H1 (cell line): ENCODE measurements at regions of chr3 and their contacts with region 1.

Region 1: DNA sequence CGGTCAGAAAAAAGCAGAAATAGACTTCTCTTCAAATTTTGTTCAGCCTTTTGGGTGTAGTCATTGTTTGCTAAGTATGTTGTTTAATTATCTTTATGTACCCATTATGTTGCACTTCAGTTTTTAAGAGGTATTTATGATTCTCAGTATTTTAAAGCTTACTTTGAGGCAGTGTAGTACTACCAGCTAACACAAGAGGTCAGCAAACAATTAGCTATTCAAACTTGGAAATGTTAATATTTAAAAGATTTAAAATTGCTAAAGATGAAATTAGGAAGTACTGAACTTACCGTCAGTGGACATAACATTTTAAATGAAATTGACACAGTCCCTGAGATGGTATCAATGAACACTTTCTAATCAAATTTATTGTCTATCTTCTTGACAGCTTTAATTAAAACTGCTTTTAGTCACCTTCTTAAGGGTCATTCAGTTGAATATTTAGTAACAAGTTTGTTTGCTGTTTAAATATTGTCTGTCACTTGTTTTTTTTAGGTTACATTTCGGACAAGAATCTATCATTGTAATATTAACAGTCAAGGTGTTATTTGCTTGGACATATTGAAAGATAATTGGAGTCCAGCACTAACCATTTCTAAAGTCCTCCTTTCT is 28.1 kb downstream of the NKIRAS1 start:
- DNase-seq: no peak
- H3K4me3 ChIP-seq: no peak overlapping the region
- H3K27ac ChIP-seq: no peak overlapping the region
- H3K4me1 ChIP-seq: peaks cover 0 to 7% (median 1%) of the 10 kb centered on the region in 4 experiments; a peak in 3 of 7 replicates
- H3K27me3 ChIP-seq: no peaks in the 10 kb centered on the region
- CTCF ChIP-seq: peak in 2 of 3 experiments; percentile 5 to 53; a peak in 2 of 4 replicates
- EP300 ChIP-seq: no peak
- POLR2A ChIP-seq: no peak
- RAD21 ChIP-seq: peak in 1 of 2 experiments; percentile 64

Region 2: GRCh38 chr3:23819599-23820360 is 68.9 kb before region 1 on chr3:
- CTCF ChIA-PET with region 1: no interaction called
- POLR2A ChIA-PET with region 1: no interaction called
- DNase-seq: no peak
- H3K4me3 ChIP-seq: no peak overlapping the region
- H3K27ac ChIP-seq: no peak overlapping the region
- H3K4me1 ChIP-seq: peaks cover 0 to 17% (median 5%) of the 10 kb centered on the region in 4 experiments; a peak in 4 of 7 replicates
- H3K27me3 ChIP-seq: no peaks in the 10 kb centered on the region
- CTCF ChIP-seq: no peak
- EP300 ChIP-seq: no peak
- POLR2A ChIP-seq: 0 out of 3 replicates have a peak, but pooled peaks of 1 of the 2 experiments have one; percentile 27
- RAD21 ChIP-seq: no peak

Region 3: DNA sequence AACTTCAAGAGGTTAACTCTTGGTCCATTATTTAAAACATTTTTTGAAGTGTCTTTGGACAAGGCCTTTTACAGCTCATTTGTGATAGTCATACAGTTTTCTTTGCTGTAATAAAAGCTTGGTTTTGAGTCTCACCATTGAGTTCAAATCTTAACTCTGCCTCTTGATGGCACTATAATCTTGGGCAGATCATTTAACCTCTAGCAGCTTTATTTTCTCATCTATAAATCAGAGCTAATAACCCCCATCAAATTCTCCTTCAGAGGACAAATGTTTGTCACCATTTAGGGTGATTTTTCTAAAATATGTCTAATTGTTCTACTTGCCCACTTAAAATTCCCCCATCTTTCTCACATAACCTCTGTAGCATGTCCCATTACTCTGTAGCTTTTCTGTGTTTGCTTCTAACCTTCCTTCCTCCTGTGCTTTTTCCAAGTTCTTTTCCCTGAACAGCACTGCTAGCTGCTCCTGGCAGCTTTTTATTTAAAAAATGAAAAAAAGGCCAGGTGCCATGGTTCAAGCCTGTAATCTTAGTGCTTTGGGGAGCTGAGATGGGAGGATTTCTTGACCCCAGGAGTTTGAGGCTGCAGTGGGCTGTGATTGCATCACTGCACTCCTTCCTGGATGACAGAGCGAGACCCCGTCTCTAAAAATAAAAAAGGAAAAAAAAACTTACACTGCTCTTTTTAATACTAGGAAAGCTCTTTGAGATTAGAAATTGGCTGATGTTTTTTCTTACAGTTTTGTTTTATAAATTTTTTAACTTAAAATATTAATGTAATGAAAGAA is 54.4 kb before region 1 on chr3:
- CTCF ChIA-PET with region 1: interaction called, 15 read pairs
- POLR2A ChIA-PET with region 1: no interaction called
- DNase-seq: no peak
- H3K4me3 ChIP-seq: no peak overlapping the region
- H3K27ac ChIP-seq: no peak overlapping the region
- H3K4me1 ChIP-seq: no peaks in the 10 kb centered on the region; a peak in 2 of 7 replicates
- H3K27me3 ChIP-seq: no peaks in the 10 kb centered on the region
- CTCF ChIP-seq: no peak
- EP300 ChIP-seq: no peak
- POLR2A ChIP-seq: no peak
- RAD21 ChIP-seq: peak; percentile 41 to 44

Region 4: DNA sequence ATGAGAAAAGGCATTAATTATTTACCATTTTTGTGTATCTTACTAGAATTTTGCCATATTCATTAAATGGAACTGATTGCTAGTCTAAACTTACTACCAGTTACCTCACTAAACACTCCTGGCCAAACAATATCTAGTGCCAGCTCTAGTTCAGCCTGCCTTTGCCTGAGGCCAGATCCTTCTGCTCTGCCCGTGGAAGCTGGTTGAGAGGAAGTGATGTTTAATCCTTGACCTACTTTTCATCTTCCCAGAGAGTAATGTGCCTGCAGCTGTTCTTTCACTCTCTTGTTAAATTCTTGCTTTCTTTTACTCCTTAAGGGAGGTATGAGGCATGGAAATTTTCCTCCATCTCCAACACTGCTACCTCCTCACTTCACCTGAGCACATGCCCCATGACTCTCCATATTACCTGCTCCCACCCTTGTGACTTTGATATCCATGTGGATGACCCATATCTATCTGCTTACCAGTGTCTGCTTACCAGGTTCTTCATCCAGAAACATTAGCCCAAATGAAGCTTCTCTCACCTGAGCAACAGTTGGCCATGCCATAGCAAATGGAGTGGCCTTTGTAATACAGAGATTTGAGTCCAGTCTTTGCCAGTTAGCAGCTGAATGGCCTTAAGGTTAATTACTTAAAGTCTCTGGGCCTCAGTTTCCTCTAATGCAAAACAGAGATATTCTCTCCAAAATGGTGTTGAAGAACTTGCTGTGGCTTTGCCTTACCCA is 29.5 kb before region 1 on chr3:
- CTCF ChIA-PET with region 1: interaction called, 13 read pairs
- POLR2A ChIA-PET with region 1: interaction called, 3 read pairs
- DNase-seq: no peak
- H3K4me3 ChIP-seq: no peak overlapping the region
- H3K27ac ChIP-seq: no peak overlapping the region
- H3K4me1 ChIP-seq: peaks cover 0 to 11% (median 1%) of the 10 kb centered on the region in 4 experiments; a peak in 4 of 7 replicates
- H3K27me3 ChIP-seq: no peaks in the 10 kb centered on the region
- CTCF ChIP-seq: no peak
- EP300 ChIP-seq: no peak
- POLR2A ChIP-seq: no peak
- RAD21 ChIP-seq: no peak

Region 5: GRCh38 chr3:23877329-23877980 is 11.3 kb before region 1 on chr3:
- CTCF ChIA-PET with region 1: interaction called, 34 read pairs
- POLR2A ChIA-PET with region 1: interaction called, 7 read pairs
- DNase-seq: no peak
- H3K4me3 ChIP-seq: no peak overlapping the region
- H3K27ac ChIP-seq: no peak overlapping the region
- H3K4me1 ChIP-seq: no peaks in the 10 kb centered on the region; a peak in 2 of 7 replicates
- H3K27me3 ChIP-seq: no peaks in the 10 kb centered on the region
- CTCF ChIP-seq: no peak
- EP300 ChIP-seq: no peak
- POLR2A ChIP-seq: no peak
- RAD21 ChIP-seq: no peak

Region 6: GRCh38 chr3:23923786-23924185 is 35.1 kb after region 1 on chr3:
- CTCF ChIA-PET with region 1: interaction called, 24 read pairs
- POLR2A ChIA-PET with region 1: interaction called, 143 read pairs
- DNase-seq: no peak
- H3K4me3 ChIP-seq: no peak overlapping the region; a peak in 1 of 8 replicates
- H3K27ac ChIP-seq: no peak overlapping the region
- H3K4me1 ChIP-seq: peaks cover 0 to 3% (median 1%) of the 10 kb centered on the region in 4 experiments; a peak in 2 of 7 replicates
- H3K27me3 ChIP-seq: no peaks in the 10 kb centered on the region
- CTCF ChIP-seq: no peak
- EP300 ChIP-seq: no peak
- POLR2A ChIP-seq: no peak
- RAD21 ChIP-seq: no peak

Region 7: DNA sequence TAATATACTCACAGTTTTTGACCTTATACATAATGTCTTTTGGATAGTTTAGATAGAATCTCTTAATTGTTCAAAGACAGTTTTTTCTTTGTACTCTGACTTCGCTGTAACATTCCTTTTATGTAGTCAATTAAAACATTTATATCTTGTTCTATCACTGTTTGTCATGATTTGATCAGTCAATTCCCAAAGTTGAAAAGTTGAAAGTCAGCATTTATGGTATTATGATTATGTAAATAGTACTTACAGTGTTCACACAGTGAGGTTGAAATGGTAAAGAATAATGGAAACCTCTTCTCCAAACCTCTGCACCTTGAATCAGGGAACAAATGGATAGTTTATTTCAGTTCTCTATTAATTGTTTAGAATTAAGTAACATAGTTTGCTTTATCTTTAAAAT is 83.0 kb after region 1 on chr3:
- CTCF ChIA-PET with region 1: no interaction called
- POLR2A ChIA-PET with region 1: no interaction called
- DNase-seq: no peak
- H3K4me3 ChIP-seq: no peak overlapping the region
- H3K27ac ChIP-seq: no peak overlapping the region
- H3K4me1 ChIP-seq: no peaks in the 10 kb centered on the region
- H3K27me3 ChIP-seq: no peaks in the 10 kb centered on the region
- CTCF ChIP-seq: no peak
- EP300 ChIP-seq: no peak
- POLR2A ChIP-seq: no peak
- RAD21 ChIP-seq: no peak